Stomach (tissue), 19 donors: ENCODE measurements at regions of chr10 and their contacts with region 1.

Region 1: DNA sequence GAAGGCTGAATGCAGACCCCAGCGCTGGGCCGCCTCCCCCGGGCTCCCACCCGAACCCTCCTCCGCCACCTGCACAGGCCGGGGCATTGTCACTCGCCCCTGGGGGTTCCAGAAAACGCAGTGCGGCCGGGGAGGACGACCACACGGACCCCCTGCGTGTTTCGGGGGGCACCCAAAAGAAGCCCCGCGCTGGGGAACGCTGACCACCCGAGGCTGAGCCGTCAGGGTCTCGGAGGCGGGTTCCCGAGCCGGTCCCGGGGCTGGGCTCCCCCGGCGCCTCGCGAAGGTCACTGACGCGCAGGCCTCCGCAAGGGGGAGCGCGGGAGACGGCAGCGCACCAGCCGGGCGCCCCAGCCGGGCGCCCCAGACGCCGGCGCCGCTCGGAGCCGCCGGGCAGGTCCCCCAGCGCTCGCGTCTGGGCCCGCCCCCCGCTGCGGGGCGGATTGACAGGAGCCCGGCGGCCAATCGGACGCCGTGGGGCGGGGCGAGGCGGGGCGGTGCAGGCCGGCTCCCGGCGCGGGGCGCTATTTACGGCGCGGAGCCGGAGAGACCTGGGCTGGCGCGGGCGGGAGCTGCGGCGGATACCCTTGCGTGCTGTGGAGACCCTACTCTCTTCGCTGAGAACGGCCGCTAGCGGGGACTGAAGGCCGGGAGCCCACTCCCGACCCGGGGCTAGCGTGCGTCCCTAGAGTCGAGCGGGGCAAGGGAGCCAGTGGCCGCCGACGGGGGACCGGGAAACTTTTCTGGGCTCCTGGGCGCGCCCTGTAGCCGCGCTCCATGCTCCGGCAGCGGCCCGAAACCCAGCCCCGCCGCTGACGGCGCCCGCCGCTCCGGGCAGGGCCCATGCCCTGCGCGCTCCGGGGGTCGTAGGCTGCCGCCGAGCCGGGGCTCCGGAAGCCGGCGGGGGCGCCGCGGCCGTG is at the start of gene BAMBI:
- DNase-seq: peak; percentile 95 to 98
- H3K4me3 ChIP-seq: peak within 1 kb of the TSS; percentile 70 to 83 (median 78)
- H3K27ac ChIP-seq: peak within 1 kb of the TSS; percentile 57 to 89 (median 76)
- H3K4me1 ChIP-seq: peaks cover 18 to 44% (median 33%) of the 10 kb centered on the region in 4 donors
- H3K27me3 ChIP-seq: peaks cover 0 to 68% (median 23%) of the 10 kb centered on the region in 3 donors
- CTCF ChIP-seq: peak in 4 of 7 experiments; percentile 34 to 84 (median 48)
- EP300 ChIP-seq: no peak
- POLR2A ChIP-seq: peak in 1 of 4 donors; percentile 38
- total RNA-seq, gene BAMBI: 4.2 to 9.1 TPM in 2 of 5 donors, not detected in the others

Region 2: DNA sequence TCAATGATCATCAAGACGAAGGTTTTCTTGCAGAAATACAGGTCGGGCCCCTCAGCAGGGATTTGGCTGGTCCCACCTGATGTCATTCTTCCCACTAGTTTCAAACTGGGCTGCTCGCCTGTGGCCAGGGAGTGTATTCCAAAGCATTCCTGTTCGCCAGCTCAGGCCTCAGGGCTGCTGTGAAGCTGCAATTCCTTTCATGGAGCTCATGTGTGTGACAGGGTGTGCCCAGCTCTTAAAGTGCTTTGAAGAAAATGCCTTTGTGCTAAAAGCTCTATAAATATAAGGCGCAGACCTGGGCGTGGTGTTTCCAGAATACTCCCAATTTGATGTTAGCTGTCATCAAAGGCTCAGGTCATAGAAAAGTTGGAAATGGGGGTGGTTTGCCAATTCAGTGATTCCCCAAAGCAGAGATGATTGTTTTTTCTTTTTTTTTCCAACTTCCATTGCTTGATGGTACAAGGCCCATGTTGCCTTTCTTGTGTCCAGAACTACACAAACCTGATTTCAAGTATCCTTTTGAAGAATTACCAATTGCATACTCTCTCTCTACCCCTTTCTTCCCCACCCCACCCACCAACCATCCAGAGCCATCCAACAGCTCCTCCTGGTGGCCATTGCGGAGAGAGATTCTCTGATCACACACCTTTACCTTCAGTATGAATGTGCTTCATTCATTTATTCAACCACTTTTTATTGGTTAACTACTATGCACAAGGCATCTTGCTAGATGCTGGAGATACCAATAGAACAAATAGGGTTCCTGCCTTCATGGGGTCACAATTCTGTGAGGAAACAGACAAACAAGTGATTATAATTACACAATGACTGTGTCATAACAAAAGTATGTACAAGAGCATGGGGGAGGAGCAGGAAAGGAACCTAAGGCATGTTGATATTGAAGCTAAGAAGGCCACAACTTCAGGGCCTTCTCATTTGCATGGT is 314.4 kb after region 1 on chr10:
- intact Hi-C with region 1: loop called (anchors 5 kb)
- DNase-seq: peak; percentile 42 to 64
- H3K4me3 ChIP-seq: no peak overlapping the region
- H3K27ac ChIP-seq: no peak overlapping the region
- H3K4me1 ChIP-seq: peaks cover 0 to 6% (median 0%) of the 10 kb centered on the region in 4 donors
- H3K27me3 ChIP-seq: no peaks in the 10 kb centered on the region
- CTCF ChIP-seq: peak in 5 of 7 experiments; percentile 41 to 85 (median 58)
- EP300 ChIP-seq: no peak
- POLR2A ChIP-seq: no peak